RWPE1 (cell line): ENCODE measurements at regions of chr6 and their contacts with region 1.

Region 1: DNA sequence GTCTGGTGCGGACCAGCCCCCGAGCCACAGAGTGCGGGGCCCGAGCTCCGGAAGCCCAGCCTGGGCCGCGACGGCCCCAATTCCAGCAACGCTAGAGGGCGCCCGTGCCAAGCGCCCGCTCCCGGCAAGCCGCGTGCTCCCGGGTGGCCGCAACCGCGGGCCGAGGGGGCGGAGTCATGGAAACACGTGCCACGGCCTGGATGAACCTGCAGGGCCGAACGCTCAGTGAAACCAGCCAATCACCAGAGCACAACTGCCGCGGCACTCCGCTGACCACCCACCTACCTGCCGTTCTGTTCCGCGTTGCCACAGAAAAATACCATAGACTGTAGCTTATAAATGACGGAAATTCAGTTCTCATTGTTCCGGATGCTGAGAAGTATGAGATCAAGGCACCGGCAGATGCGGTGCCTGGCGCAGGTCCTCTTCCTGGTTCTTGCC is 85.7 kb upstream of the FOXC1 start:
- DNase-seq: peak; percentile 85
- H3K27ac ChIP-seq: no peak overlapping the region
- CTCF ChIP-seq: peak; percentile 91

Region 2: DNA sequence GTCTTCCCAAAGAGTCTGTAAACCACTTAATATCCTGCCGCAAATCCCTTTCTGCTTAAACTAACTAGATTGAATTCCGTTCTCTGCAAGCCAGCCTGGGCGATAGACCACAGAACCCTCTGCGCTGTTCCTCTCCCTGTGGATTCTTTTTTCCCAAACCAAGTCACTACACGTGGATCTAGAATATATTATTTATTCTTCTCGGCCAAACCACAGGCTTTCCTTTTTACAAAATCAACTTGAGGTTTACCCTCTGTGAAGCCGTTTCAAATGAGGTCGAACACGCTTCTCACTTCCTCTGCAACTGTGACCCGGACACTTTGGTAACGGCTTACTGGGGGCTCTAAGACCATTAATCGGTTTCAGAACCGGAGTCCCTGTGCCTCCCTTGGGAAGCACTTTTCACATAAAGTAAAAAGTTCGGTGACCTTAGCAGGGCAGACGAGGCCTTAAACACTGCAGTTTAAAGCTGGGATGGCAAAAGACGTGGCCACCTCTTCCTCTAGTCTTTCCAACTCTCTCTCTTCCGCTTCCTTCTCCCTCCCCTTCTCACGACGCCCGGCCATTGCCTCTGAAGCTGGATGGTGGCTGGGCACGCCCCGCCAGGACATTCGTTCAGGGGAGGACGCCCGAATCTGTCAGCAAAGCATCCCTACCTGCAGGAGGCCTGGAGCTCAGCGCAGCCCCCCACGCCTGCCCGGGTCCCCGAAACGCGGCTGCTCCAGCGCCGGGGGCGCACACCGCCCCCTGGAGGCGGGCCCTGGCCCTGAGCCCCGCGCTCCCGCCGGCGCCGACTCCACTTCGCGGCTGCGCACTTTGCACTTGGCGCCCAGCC is 30.6 kb after region 1 on chr6:
- CTCF ChIA-PET with region 1: interaction called, 12 read pairs
- POLR2A ChIA-PET with region 1: no interaction called
- DNase-seq: peak; percentile 85
- H3K27ac ChIP-seq: peak overlapping the region; percentile 55
- CTCF ChIP-seq: peak; percentile 88